Thyroid gland (tissue), 4 donors: ENCODE measurements at regions of chr9 and their contacts with region 1.

Region 1: GRCh38 chr9:72592502-72593403 is 71.3 kb downstream of the TMC1 start:
- DNase-seq: no peak
- H3K4me3 ChIP-seq: no peak overlapping the region
- H3K27ac ChIP-seq: no peak overlapping the region
- H3K4me1 ChIP-seq: peaks cover 5 to 13% of the 10 kb centered on the region in 2 donors
- H3K27me3 ChIP-seq: no peaks in the 10 kb centered on the region
- CTCF ChIP-seq: peak; percentile 59 to 90 (median 82)
- POLR2A ChIP-seq: no peak

Region 2: GRCh38 chr9:72294936-72295335 is 297.8 kb before region 1 on chr9:
- intact Hi-C with region 1: loop called (anchors 5 kb)
- DNase-seq: peak in 1 of 2 donors; percentile 24
- H3K4me3 ChIP-seq: no peak overlapping the region
- H3K27ac ChIP-seq: no peak overlapping the region
- H3K4me1 ChIP-seq: peaks cover 3 to 18% of the 10 kb centered on the region in 2 donors
- H3K27me3 ChIP-seq: no peaks in the 10 kb centered on the region
- CTCF ChIP-seq: no peak
- POLR2A ChIP-seq: no peak

Region 3: GRCh38 chr9:72371151-72371550 is 221.6 kb before region 1 on chr9:
- intact Hi-C with region 1: loop called (anchors 10 kb)
- DNase-seq: no peak
- H3K4me3 ChIP-seq: no peak overlapping the region
- H3K27ac ChIP-seq: no peak overlapping the region
- H3K4me1 ChIP-seq: peaks cover 1 to 6% of the 10 kb centered on the region in 2 donors
- H3K27me3 ChIP-seq: no peaks in the 10 kb centered on the region
- CTCF ChIP-seq: no peak
- POLR2A ChIP-seq: no peak

Region 4: DNA sequence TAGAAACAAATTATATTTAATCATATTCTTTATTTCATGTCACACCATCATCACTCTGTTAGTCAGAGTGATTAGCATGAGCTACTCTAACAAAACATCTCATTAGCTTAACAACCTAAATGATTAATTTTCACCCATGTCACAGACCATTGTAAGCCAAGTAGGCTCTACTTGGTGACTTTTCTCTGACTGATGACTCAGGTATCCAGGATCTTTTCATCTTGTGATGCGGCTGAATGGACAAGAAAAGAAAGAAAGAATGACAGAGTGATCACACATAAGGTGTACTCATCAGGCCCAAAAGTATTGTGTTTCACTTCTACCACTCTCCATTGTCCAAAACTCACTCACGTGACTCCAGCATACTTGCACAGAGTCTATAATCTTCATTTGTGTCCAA is 858.2 kb after region 1 on chr9:
- intact Hi-C with region 1: no loop called
- DNase-seq: no peak
- H3K4me3 ChIP-seq: no peak overlapping the region
- H3K27ac ChIP-seq: no peak overlapping the region
- H3K4me1 ChIP-seq: no peaks in the 10 kb centered on the region
- H3K27me3 ChIP-seq: no peaks in the 10 kb centered on the region
- CTCF ChIP-seq: no peak
- POLR2A ChIP-seq: no peak